Endothelial cell of umbilical vein (primary cell): ENCODE measurements at regions of chr5 and their contacts with region 1.

Region 1: DNA sequence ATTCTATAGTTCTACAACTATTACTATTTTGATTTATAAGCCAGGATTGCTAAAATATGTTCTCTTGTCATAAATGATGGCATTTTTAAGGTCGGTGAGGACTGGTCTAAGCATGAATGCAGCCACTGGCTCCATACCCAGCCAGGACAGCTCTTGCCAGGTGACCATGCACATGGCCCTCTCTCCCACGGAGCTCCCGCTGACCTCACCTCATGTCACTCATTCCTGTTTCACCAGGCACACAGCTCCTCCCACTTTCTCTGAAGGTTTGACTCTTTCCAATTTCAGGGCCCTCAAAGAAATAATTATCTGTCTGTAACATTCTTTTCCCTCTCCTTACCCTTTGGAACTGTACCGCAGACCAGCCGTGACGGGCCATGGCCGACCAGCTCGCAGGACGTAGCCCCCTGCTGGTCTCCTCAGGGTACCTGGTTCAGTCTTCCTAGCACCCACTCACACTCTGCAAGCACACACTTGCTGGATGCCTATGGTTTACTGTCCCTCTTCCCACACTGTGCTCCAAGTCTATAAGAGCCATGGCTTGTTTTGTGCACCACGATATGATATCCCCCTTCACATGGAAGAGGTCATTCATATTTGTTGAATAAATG is 72.6 kb downstream of the LIFR start:
- DNase-seq: no peak
- H3K4me3 ChIP-seq: no peak overlapping the region
- H3K27ac ChIP-seq: no peak overlapping the region
- H3K4me1 ChIP-seq: no peaks in the 10 kb centered on the region
- H3K27me3 ChIP-seq: no peaks in the 10 kb centered on the region
- CTCF ChIP-seq: peak in 1 of 2 donors; percentile 4
- POLR2A ChIP-seq: no peak

Region 2: DNA sequence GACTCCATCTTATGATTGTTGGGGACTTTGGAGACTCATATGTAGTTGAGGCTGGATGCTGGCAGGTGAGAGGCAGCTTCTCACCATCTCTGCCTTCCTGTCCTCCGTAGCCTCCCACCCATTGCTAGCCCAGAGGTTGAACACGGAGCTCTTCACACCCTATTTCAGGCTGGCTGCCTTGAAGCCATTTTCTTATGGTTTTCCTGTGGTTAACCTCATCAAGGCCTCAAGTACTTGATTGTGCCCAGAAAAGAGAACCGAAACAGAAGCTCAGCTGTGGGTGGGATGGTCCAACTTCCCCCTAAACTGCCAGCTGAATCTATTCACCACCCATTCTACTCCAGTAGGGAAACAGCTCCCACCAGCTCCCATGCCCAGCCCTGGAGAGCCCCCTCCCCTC is 30.4 kb before region 1 on chr5:
- CTCF ChIA-PET with region 1: no interaction called
- POLR2A ChIA-PET with region 1: no interaction called
- dilution Hi-C with region 1: no loop called
- intact Hi-C with region 1: no loop called
- DNase-seq: no peak
- H3K4me3 ChIP-seq: no peak overlapping the region
- H3K27ac ChIP-seq: no peak overlapping the region
- H3K4me1 ChIP-seq: no peaks in the 10 kb centered on the region
- H3K27me3 ChIP-seq: no peaks in the 10 kb centered on the region
- CTCF ChIP-seq: no peak
- POLR2A ChIP-seq: no peak

Region 3: DNA sequence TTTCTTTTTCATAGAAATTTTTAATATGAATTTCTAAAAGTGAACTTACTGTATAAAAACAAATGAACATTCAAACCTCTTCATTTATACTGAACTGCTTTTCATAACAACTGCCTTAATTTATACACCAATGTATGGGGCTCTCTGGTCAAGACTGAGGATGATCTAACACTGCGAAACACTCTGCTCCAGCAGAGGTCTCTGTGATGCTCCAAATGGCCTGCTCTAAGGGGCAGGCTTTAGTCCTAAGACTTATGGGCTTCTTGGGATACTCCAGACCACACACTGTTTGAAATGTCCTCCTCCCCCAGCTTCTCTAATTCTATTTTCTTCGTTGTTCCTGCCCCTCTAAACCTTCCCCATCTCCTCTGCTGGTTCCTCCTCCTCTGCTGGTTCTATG is 14.1 kb after region 1 on chr5:
- CTCF ChIA-PET with region 1: interaction called, 3 read pairs
- POLR2A ChIA-PET with region 1: no interaction called
- dilution Hi-C with region 1: no loop called
- intact Hi-C with region 1: loop called (anchors 1 kb)
- DNase-seq: peak; percentile 14
- H3K4me3 ChIP-seq: no peak overlapping the region
- H3K27ac ChIP-seq: no peak overlapping the region
- H3K4me1 ChIP-seq: no peaks in the 10 kb centered on the region
- H3K27me3 ChIP-seq: no peaks in the 10 kb centered on the region
- CTCF ChIP-seq: no peak
- POLR2A ChIP-seq: no peak